CD14-positive monocyte (primary cell): ENCODE measurements at regions of chr22 and their contacts with region 1.

Region 1: GRCh38 chr22:41940832-41941765 is 5.9 kb downstream of the CENPM start:
- DNase-seq: peak; percentile 70 to 78 (median 72)
- H3K4me3 ChIP-seq: no peak overlapping the region
- H3K4me3 Mint-ChIP-seq: peak overlapping the region in 1 of 2 donors; percentile 42
- H3K27ac ChIP-seq: no peak overlapping the region
- H3K27ac Mint-ChIP-seq: peak overlapping the region; percentile 17 to 91 (median 76)
- H3K4me1 ChIP-seq: peaks cover 18 to 24% of the 10 kb centered on the region in 2 donors
- H3K4me1 Mint-ChIP-seq: peaks cover 32% of the 10 kb centered on the region
- H3K27me3 ChIP-seq: no peaks in the 10 kb centered on the region
- H3K27me3 Mint-ChIP-seq: peaks cover 0 to 5% (median 0%) of the 10 kb centered on the region in 3 donors
- CTCF ChIP-seq: peak; percentile 96

Region 2: GRCh38 chr22:41666661-41667258 is 274.3 kb before region 1 on chr22:
- intact Hi-C with region 1: loop called (anchors 5 kb)
- DNase-seq: peak; percentile 93 to 94 (median 93)
- H3K4me3 ChIP-seq: peak overlapping the region; percentile 13 to 69 (median 27)
- H3K4me3 Mint-ChIP-seq: peak overlapping the region; percentile 79 to 90
- H3K27ac ChIP-seq: peak overlapping the region; percentile 56 to 79
- H3K27ac Mint-ChIP-seq: peak overlapping the region; percentile 87 to 95 (median 92)
- H3K4me1 ChIP-seq: peaks cover 7 to 10% of the 10 kb centered on the region in 2 donors
- H3K4me1 Mint-ChIP-seq: peaks cover 9% of the 10 kb centered on the region
- H3K27me3 ChIP-seq: no peaks in the 10 kb centered on the region
- H3K27me3 Mint-ChIP-seq: no peaks in the 10 kb centered on the region
- CTCF ChIP-seq: peak; percentile 97

Region 3: GRCh38 chr22:41832553-41833368 is 108.3 kb before region 1 on chr22 and contains the start of gene SREBF2:
- intact Hi-C with region 1: loop called in 1 of 2 experiments (anchors 5 kb)
- DNase-seq: peak; percentile 98 to 99 (median 99)
- H3K4me3 ChIP-seq: peak within 1 kb of the TSS; percentile 63 to 87 (median 83)
- H3K4me3 Mint-ChIP-seq: peak within 1 kb of the TSS; percentile 97
- H3K27ac ChIP-seq: peak within 1 kb of the TSS; percentile 95 to 97
- H3K27ac Mint-ChIP-seq: peak within 1 kb of the TSS; percentile 98 to 100 (median 99)
- H3K4me1 ChIP-seq: peaks cover 28 to 32% of the 10 kb centered on the region in 2 donors
- H3K4me1 Mint-ChIP-seq: peaks cover 34% of the 10 kb centered on the region
- H3K27me3 ChIP-seq: no peaks in the 10 kb centered on the region
- H3K27me3 Mint-ChIP-seq: peaks cover 0 to 3% (median 2%) of the 10 kb centered on the region in 3 donors
- CTCF ChIP-seq: no peak
- polyA plus RNA-seq, gene SREBF2: 22.2 to 25.1 (median 24.5) TPM